Activated CD4-positive, alpha-beta memory T cell treated with anti-CD3 and anti-CD28 coated beads for 36 hours (primary cell): ENCODE measurements at regions of chr1 and their contacts with region 1.

Region 1: DNA sequence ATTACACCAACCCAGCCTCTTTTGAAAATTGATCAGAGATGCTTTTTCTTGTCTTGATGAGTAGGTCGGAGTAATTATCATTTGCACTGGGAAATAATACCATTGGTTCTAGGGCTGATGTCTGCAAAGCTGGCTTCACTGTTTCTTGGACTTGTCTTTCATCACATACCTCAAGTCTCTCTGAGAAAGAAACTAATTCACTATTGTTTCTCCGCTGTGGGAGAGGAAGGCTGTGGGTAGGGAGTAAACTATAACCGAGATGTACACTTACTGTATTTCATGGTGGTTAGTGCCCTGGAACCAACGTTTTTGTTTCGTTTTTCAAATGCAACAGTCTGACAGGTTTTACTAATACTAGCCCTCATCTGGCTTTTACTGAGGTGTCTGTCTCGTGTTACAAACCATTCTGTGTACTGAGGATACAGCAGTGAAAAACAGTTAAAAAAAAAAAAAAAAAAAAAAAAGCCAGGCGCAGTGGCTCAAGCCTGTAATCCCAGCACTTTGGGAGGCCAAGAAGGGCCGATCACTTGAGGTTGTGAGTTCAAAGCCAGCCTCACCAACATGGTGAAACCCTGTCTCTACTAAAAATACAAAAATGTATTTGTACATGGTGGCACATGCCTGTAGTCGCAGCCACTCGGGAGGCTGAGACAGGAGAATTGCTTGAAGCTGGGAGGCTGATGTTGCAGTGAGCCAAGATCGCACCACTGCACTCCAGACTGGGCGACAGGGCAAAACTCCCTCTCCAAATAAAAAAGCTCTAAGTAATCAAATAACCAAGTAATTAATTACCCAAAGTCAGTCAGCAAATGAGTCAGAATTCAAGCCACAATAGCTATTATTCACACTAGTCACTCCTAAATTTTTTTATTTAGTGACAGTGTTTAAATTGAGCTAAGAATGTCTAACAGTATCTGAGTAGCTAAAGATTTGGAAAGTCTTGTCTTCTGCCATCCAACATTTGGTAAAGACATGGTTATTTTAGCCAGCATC is 23.3 kb downstream of the TOMM20 start:
- DNase-seq: peak; percentile 40
- H3K4me3 Mint-ChIP-seq: peak overlapping the region; percentile 67
- H3K27ac Mint-ChIP-seq: peak overlapping the region; percentile 68
- H3K4me1 Mint-ChIP-seq: peaks cover 39% of the 10 kb centered on the region
- H3K27me3 Mint-ChIP-seq: no peaks in the 10 kb centered on the region

Region 2: GRCh38 chr1:235093696-235094592 is 11.4 kb before region 1 on chr1:
- CTCF ChIA-PET with region 1: interaction called, 22 read pairs
- POLR2A ChIA-PET with region 1: no interaction called
- intact Hi-C with region 1: no loop called
- DNase-seq: peak; percentile 90
- H3K4me3 Mint-ChIP-seq: no peak overlapping the region
- H3K27ac Mint-ChIP-seq: no peak overlapping the region
- H3K4me1 Mint-ChIP-seq: peaks cover 14% of the 10 kb centered on the region
- H3K27me3 Mint-ChIP-seq: no peaks in the 10 kb centered on the region

Region 3: DNA sequence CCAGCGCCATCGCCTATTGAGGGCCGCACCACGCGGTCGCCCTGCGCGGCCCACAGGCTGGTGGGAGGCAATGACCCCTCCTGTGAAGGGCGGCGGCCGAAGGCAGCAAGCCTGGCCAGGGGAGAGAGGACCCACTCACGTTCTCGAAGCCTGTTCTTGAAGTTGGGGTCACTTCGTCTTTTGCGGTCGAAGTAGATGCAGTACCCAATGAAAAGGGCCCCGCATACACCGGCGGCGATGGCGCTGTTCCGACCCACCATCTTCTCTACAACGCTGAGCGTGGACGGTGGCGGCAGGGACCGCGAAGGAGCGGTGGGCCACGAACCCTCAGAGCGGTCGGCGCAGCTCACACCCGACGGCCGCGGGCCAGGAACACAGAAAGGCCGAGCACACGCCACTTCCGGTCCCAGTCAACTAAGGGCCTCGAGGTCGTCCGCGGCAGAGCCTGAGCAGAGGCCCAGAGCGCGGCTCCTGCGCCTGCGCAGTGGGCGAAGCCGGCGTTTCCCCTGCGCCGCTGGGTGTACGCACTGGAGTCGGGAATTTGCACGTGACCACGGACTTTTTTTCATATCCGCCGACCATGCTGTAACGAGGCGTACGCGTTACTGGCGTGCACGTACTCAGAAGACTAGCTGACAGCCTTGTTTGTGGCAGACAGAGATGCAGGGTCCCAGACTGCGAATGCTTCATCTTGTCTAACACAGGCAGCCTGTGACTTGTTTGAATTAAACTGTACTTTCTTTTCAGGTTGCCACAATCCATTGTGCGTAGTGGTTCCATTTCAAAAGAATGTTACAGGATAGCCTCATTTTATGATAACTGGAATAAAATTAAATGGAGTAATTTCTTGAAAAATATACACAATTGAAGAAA is 23.3 kb after region 1 on chr1 and contains the start of gene TOMM20:
- CTCF ChIA-PET with region 1: interaction called, 7 read pairs
- POLR2A ChIA-PET with region 1: interaction called, 6 read pairs
- intact Hi-C with region 1: loop called (anchors 1 kb)
- DNase-seq: peak; percentile 98
- H3K4me3 Mint-ChIP-seq: peak within 1 kb of the TSS; percentile 86
- H3K27ac Mint-ChIP-seq: peak within 1 kb of the TSS; percentile 94
- H3K4me1 Mint-ChIP-seq: peaks cover 41% of the 10 kb centered on the region
- H3K27me3 Mint-ChIP-seq: no peaks in the 10 kb centered on the region
- total RNA-seq, gene TOMM20: 127 to 142 TPM